Gastrocnemius medialis (tissue), 4 donors: ENCODE measurements at regions of chr12 and their contacts with region 1.

Region 1: GRCh38 chr12:122190842-122191668 is 8.1 kb downstream of the LRRC43 start:
- DNase-seq: peak; percentile 27 to 63
- ATAC-seq: peak; percentile 75 to 93
- H3K4me3 ChIP-seq: no peak overlapping the region
- H3K27ac ChIP-seq: no peak overlapping the region
- H3K4me1 ChIP-seq: no peaks in the 10 kb centered on the region
- H3K27me3 ChIP-seq: no peaks in the 10 kb centered on the region
- CTCF ChIP-seq: peak; percentile 55 to 82 (median 77)
- POLR2A ChIP-seq: no peak

Region 2: DNA sequence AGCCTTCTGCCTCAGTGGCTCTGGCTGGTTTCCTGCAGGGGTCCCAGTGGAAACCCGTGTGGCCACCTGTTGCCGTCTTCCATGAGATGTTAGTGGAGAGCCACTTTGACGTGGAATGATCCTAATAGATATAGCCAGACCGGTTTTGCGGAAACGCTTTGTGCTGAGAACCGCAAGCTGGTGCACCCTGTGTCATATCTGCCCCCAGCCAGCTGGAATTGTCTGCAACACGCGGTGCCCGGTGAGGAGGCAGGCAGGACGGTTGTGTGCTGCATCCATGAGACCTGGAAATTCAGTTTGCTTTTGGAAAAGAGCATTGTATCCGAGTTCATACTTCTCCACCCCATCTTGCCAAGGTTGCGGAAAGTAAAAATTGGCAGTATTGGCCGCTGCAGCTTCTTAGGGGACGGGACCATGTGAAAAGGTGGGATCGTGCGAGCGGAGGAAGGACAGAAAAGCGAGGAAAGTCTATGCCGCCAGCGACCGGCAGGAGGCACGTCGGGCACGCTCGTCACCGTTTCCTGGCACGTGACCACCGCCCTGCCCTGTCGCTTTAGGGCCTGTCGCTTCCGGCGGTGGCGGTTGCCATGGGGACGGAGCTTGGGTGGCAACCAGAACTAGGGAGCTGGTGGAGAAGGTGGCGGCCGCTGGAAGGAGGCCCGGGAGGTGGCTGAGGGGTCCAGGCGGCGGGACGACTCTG is 272.9 kb before region 1 on chr12 and contains the start of gene CFAP251:
- in situ Hi-C with region 1: no loop called
- intact Hi-C with region 1: loop called (anchors 10 kb)
- DNase-seq: peak; percentile 84 to 89
- ATAC-seq: peak; percentile 72 to 81
- H3K4me3 ChIP-seq: peak within 1 kb of the TSS; percentile 43 to 57 (median 48)
- H3K27ac ChIP-seq: peak within 1 kb of the TSS; percentile 21 to 51 (median 39)
- H3K4me1 ChIP-seq: peaks cover 1 to 9% of the 10 kb centered on the region in 2 donors
- H3K27me3 ChIP-seq: no peaks in the 10 kb centered on the region
- CTCF ChIP-seq: peak; percentile 64 to 89 (median 78)
- POLR2A ChIP-seq: no peak
- total RNA-seq, gene CFAP251: 0.49 to 4.9 (median 0.61) TPM

Region 3: GRCh38 chr12:121955258-121956235 is 235.5 kb before region 1 on chr12:
- in situ Hi-C with region 1: no loop called
- intact Hi-C with region 1: no loop called
- DNase-seq: no peak
- ATAC-seq: peak in 1 of 2 donors; percentile 27
- H3K4me3 ChIP-seq: no peak overlapping the region
- H3K27ac ChIP-seq: no peak overlapping the region
- H3K4me1 ChIP-seq: no peaks in the 10 kb centered on the region
- H3K27me3 ChIP-seq: no peaks in the 10 kb centered on the region
- CTCF ChIP-seq: peak in 4 of 5 experiments; percentile 3 to 57 (median 37)
- POLR2A ChIP-seq: no peak

Region 4: GRCh38 chr12:122040579-122041386 is 150.3 kb before region 1 on chr12:
- in situ Hi-C with region 1: loop called in 1 of 4 experiments (anchors 10 kb)
- intact Hi-C with region 1: no loop called
- DNase-seq: no peak
- ATAC-seq: no peak
- H3K4me3 ChIP-seq: no peak overlapping the region
- H3K27ac ChIP-seq: no peak overlapping the region
- H3K4me1 ChIP-seq: no peaks in the 10 kb centered on the region
- H3K27me3 ChIP-seq: no peaks in the 10 kb centered on the region
- CTCF ChIP-seq: no peak
- POLR2A ChIP-seq: no peak

Region 5: DNA sequence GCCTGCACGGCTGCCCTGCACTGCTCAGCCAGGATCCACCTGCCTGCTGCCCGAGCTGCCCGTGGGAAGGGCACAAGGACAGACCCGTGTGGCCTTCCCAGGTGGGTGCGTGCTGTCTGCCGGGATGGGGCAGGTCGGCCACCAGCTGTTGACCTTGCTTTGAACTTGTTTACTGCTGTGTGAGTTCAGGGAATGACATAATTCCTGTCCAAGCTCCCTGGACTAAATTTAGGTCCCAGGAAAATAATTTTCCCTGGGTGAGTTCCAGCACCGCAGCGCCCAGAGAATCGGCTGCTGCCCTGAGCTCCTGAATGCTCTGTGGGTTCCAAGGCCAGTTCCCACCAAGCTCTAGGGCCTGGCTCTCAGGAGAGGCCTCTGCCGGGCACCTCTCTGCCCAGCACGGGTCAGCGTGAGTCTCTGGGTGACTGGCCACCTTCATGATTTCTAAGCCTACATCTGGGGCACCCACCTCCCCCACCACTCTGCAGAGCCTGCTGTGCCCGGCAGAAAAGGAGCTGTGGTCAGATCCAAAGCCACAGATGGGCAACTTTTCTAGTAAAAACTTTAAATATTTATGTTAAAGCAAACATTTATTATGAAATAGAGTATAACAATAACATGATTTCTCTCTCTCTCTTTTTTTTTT is 139.7 kb before region 1 on chr12:
- in situ Hi-C with region 1: loop called in 1 of 4 experiments (anchors 10 kb)
- intact Hi-C with region 1: loop called (anchors 1 kb)
- DNase-seq: peak; percentile 85 to 89
- ATAC-seq: peak; percentile 87 to 89
- H3K4me3 ChIP-seq: peak overlapping the region in 2 of 4 donors; percentile 13 to 36
- H3K27ac ChIP-seq: peak overlapping the region; percentile 77 to 95 (median 92)
- H3K4me1 ChIP-seq: peaks cover 32 to 38% of the 10 kb centered on the region in 2 donors
- H3K27me3 ChIP-seq: no peaks in the 10 kb centered on the region
- CTCF ChIP-seq: no peak
- POLR2A ChIP-seq: peak in 1 of 2 donors; percentile 22

Region 6: GRCh38 chr12:122130150-122130549 is 60.9 kb before region 1 on chr12:
- in situ Hi-C with region 1: loop called in 1 of 4 experiments (anchors 10 kb)
- intact Hi-C with region 1: loop called (anchors 2 kb)
- DNase-seq: no peak
- ATAC-seq: no peak
- H3K4me3 ChIP-seq: no peak overlapping the region
- H3K27ac ChIP-seq: peak overlapping the region in 3 of 4 donors; percentile 14 to 92 (median 30)
- H3K4me1 ChIP-seq: peaks cover 20 to 26% of the 10 kb centered on the region in 2 donors
- H3K27me3 ChIP-seq: no peaks in the 10 kb centered on the region
- CTCF ChIP-seq: no peak
- POLR2A ChIP-seq: no peak

Region 7: DNA sequence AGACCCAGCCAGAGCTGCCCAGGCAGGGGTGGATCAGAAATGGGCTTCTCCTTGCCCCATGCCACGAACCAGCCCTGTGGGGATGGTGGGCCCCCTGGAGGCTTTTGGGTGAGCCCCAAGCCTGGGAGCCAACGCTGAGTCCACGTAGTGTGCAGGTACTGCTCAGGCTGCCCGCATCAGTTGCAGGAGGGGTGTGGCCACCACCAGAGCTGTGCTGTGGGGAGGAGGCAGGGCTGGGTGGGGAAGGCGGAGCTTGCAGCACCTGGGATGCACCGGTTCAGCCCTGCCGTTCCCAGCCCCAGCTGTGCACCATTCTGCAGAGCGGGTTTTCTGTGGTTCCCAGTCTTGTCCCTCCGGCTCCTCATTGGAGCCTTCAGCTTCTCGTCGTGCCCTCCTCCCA is 53.4 kb before region 1 on chr12:
- in situ Hi-C with region 1: loop called in 1 of 4 experiments (anchors 10 kb)
- intact Hi-C with region 1: no loop called
- DNase-seq: no peak
- ATAC-seq: no peak
- H3K4me3 ChIP-seq: no peak overlapping the region
- H3K27ac ChIP-seq: peak overlapping the region in 3 of 4 donors; percentile 88 to 93 (median 91)
- H3K4me1 ChIP-seq: peaks cover 22 to 25% of the 10 kb centered on the region in 2 donors
- H3K27me3 ChIP-seq: no peaks in the 10 kb centered on the region
- CTCF ChIP-seq: no peak
- POLR2A ChIP-seq: no peak

Region 8: GRCh38 chr12:122166422-122167349 is 24.4 kb before region 1 on chr12:
- in situ Hi-C with region 1: no loop called
- intact Hi-C with region 1: no loop called
- DNase-seq: no peak
- ATAC-seq: no peak
- H3K4me3 ChIP-seq: no peak overlapping the region
- H3K27ac ChIP-seq: no peak overlapping the region
- H3K4me1 ChIP-seq: no peaks in the 10 kb centered on the region
- H3K27me3 ChIP-seq: peaks cover 0 to 2% (median 0%) of the 10 kb centered on the region in 3 donors
- CTCF ChIP-seq: no peak
- POLR2A ChIP-seq: no peak